ENCODE measurements at regions of chr3 and their contacts with region 1.

Region 1: DNA sequence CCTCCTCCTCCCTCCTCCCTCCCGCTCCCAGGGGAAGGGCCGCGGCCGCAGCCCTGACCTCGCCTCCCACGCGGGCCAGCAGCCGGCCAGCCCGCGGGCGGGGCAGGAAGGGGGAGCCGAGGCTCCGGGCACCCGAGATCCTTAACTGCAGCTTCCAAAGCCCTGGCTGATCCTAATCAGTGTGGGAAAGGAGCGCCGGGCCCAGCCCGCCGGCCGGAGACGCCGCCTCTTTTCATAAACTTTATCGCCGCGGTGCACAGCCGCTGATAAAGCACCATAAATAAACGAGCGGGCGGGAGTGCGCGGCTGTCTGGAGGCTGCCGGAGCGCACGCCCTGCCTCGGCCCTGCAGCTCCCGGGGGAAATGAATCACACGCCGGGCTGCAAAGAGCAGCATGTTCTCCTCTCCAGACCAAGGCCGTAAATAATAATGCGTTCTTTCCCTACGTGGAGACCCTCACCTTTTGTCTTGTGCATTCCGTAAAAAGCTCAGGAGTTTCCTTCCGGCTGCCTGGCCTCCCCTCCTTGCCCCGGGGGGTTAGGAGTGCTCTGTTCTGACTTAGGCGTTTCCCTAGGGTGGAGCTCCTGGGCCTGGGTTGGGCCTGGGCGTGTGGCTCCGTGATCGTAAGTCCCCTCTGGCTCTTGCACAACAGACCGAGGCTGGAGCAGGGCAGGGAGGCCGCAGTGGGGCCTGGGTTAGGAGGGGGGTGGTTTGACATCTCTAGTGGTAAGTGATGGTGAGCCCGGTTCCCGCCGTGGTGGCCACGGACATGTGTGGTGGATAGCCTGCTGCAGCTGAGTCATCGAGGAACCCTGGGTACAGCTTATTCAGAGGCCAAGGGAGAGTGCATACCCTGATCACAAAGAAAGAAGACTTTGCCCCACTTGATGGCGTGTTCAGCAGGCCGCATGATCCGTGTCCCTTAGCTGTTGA is 132.6 kb upstream of the HES1 start:
- DNase-seq: peak; percentile 92 to 94
- H3K4me3 ChIP-seq: peak overlapping the region in 1 of 2 donors; percentile 30
- H3K27ac ChIP-seq: peak overlapping the region; percentile 75 to 80
- H3K4me1 ChIP-seq: peaks cover 7 to 8% of the 10 kb centered on the region in 2 donors
- H3K27me3 ChIP-seq: no peaks in the 10 kb centered on the region
- CTCF ChIP-seq: no peak
- POLR2A ChIP-seq: peak in 1 of 2 donors; percentile 8

Region 2: GRCh38 chr3:192079098-192079497 is 1924.3 kb before region 1 on chr3:
- intact Hi-C with region 1: no loop called
- DNase-seq: no peak
- H3K4me3 ChIP-seq: no peak overlapping the region
- H3K27ac ChIP-seq: no peak overlapping the region
- H3K4me1 ChIP-seq: no peaks in the 10 kb centered on the region
- H3K27me3 ChIP-seq: no peaks in the 10 kb centered on the region
- CTCF ChIP-seq: no peak
- POLR2A ChIP-seq: no peak

Region 3: GRCh38 chr3:193910886-193911738 is 92.3 kb before region 1 on chr3:
- intact Hi-C with region 1: no loop called
- DNase-seq: no peak
- H3K4me3 ChIP-seq: no peak overlapping the region
- H3K27ac ChIP-seq: no peak overlapping the region
- H3K4me1 ChIP-seq: no peaks in the 10 kb centered on the region
- H3K27me3 ChIP-seq: no peaks in the 10 kb centered on the region
- CTCF ChIP-seq: no peak
- POLR2A ChIP-seq: no peak

Region 4: GRCh38 chr3:194070634-194071409 is 67.4 kb after region 1 on chr3:
- intact Hi-C with region 1: no loop called
- DNase-seq: peak; percentile 62 to 73
- H3K4me3 ChIP-seq: peak overlapping the region; percentile 38 to 49
- H3K27ac ChIP-seq: peak overlapping the region in 1 of 2 donors; percentile 61
- H3K4me1 ChIP-seq: no peaks in the 10 kb centered on the region
- H3K27me3 ChIP-seq: no peaks in the 10 kb centered on the region
- CTCF ChIP-seq: peak in 1 of 4 experiments; percentile 8
- POLR2A ChIP-seq: no peak

Region 5: GRCh38 chr3:194141415-194142155 is 138.2 kb after region 1 on chr3:
- intact Hi-C with region 1: loop called (anchors 10 kb)
- DNase-seq: peak; percentile 92 to 94
- H3K4me3 ChIP-seq: peak overlapping the region in 1 of 2 donors; percentile 40
- H3K27ac ChIP-seq: peak overlapping the region; percentile 95 to 99
- H3K4me1 ChIP-seq: peaks cover 10 to 18% of the 10 kb centered on the region in 2 donors
- H3K27me3 ChIP-seq: no peaks in the 10 kb centered on the region
- CTCF ChIP-seq: no peak
- POLR2A ChIP-seq: no peak

Measured in uterus (tissue), 4 donors.